Activated T-helper 1 cell treated with anti-CD3 and anti-CD28 coated beads, Interleukin-12 subunit alpha, Interleukin-12 subunit beta, Interleukin-2, Interleukin-4 antibody, amounts not matched to agents 30 ng/mL and 10 ng/mL and 1 ng/mL, durations not matched to agents 14 hours and 24 hours and 36 hours (primary cell): ENCODE measurements at regions of chr3 and their contacts with region 1.

Region 1: GRCh38 chr3:73007992-73008712 is 11.5 kb downstream of the PPP4R2 start:
- DNase-seq: no peak
- H3K4me3 Mint-ChIP-seq: no peak overlapping the region
- H3K27ac Mint-ChIP-seq: peak overlapping the region; percentile 56
- H3K4me1 Mint-ChIP-seq: peaks cover 66% of the 10 kb centered on the region
- H3K27me3 Mint-ChIP-seq: no peaks in the 10 kb centered on the region

Region 2: DNA sequence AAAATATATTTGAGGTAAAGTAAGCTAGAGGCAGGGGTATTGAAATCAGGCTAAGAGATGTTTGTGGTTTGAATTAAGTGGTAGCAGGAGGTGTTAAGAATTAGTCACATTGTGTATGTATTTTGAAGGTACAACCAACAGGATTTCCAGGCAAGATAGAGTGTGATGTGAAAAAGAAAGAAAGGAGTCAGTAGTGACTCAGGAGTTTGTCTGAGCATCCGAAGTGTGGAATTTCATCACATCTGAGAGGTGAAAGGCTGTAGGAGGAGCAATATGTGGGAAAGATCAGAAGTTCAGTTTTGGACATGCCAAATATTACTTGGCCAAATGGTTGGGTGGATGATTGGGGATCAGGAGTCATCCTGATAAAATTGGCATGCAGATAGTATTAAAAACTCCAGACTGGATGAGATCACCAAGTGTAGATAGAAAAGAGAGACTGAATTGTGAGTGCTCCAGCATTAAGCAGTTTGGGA is 21.2 kb after region 1 on chr3:
- intact Hi-C with region 1: loop called (anchors 2 kb)
- DNase-seq: no peak
- H3K4me3 Mint-ChIP-seq: peak overlapping the region; percentile 1
- H3K27ac Mint-ChIP-seq: peak overlapping the region; percentile 70
- H3K4me1 Mint-ChIP-seq: peaks cover 56% of the 10 kb centered on the region
- H3K27me3 Mint-ChIP-seq: no peaks in the 10 kb centered on the region

Region 3: DNA sequence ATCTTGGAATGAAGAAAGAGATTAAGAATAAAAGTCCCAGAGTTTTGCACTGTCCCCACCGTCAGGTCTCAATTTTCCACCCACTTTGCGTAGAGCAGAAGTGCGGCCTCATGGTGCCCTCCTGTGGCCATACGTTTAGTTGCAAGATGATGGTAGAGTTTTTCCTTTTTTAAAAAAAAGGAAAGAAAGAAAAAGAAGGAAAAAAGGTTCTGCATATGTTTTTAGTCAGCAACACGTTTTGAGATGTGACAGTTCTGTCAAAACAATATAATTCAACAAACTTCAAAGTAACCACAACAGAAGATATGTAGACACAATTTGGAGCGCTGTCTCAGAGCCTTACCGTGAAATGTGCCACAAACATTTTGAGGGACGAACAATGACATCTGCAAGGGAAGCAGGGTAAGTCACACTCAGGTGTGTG is 77.9 kb after region 1 on chr3:
- intact Hi-C with region 1: no loop called
- DNase-seq: peak; percentile 16
- H3K4me3 Mint-ChIP-seq: no peak overlapping the region
- H3K27ac Mint-ChIP-seq: no peak overlapping the region
- H3K4me1 Mint-ChIP-seq: peaks cover 9% of the 10 kb centered on the region
- H3K27me3 Mint-ChIP-seq: peaks cover 5% of the 10 kb centered on the region